ENCODE measurements at regions of chr4 and their contacts with region 1.

Region 1: GRCh38 chr4:185304944-185305690 is 90.6 kb downstream of the LRP2BP start:
- DNase-seq: peak in 2 of 10 donors; percentile 10 to 20

Region 2: GRCh38 chr4:185210102-185210981 is 94.8 kb before region 1 on chr4:
- intact Hi-C with region 1: loop called (anchors 5 kb)
- DNase-seq: peak in 8 of 10 donors; percentile 30 to 90 (median 41)

Region 3: GRCh38 chr4:185395956-185396723 is 91.0 kb after region 1 on chr4:
- intact Hi-C with region 1: loop called (anchors 10 kb)
- DNase-seq: peak; percentile 93 to 100 (median 97)